ENCODE measurements at regions of chr4 and their contacts with region 1.

Region 1: DNA sequence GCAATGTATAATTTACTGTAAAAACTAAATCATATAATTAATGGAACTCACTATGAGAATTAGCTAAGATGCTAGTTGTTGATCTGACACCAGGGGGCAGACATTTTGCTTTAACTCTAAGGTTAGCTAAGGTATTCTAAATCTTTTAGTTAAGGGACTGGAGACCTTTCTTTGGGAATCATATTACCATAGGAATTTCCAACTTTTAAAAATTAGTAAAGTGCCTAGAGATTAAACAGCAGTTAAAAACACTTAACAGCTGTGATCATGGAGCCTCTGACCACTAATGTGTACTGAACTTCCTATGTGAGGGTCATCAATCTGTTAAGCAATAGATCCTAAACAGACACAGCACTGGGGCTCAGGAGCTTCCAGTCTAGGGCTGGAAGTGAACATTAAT is 226.6 kb downstream of the NSUN7 start:
- DNase-seq: no peak
- ATAC-seq: no peak

Region 2: GRCh38 chr4:40924096-40924792 is 52.1 kb before region 1 on chr4:
- intact Hi-C with region 1: loop called (anchors 5 kb)
- DNase-seq: peak; percentile 89
- ATAC-seq: peak; percentile 40

Region 3: DNA sequence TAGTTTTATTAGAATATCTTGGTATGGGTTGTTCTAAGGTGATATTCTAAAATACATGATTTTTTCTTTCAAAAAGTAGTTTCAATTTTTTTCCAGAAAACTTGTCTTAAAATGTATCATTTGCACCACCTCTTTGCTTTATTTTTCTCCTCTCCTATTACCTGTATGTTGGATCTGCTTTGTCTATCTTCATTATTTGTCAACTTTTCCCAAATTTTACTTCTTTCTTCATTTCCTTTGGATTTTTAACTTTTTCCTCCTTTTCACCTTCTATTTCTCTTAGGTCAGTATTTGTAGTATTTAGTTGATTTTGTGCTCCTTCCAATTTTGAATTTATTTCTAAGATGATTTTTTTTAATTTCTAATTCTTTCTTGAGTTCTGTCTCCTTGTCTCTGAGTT is 68.4 kb after region 1 on chr4:
- intact Hi-C with region 1: loop called (anchors 5 kb)
- DNase-seq: no peak
- ATAC-seq: no peak

Region 4: DNA sequence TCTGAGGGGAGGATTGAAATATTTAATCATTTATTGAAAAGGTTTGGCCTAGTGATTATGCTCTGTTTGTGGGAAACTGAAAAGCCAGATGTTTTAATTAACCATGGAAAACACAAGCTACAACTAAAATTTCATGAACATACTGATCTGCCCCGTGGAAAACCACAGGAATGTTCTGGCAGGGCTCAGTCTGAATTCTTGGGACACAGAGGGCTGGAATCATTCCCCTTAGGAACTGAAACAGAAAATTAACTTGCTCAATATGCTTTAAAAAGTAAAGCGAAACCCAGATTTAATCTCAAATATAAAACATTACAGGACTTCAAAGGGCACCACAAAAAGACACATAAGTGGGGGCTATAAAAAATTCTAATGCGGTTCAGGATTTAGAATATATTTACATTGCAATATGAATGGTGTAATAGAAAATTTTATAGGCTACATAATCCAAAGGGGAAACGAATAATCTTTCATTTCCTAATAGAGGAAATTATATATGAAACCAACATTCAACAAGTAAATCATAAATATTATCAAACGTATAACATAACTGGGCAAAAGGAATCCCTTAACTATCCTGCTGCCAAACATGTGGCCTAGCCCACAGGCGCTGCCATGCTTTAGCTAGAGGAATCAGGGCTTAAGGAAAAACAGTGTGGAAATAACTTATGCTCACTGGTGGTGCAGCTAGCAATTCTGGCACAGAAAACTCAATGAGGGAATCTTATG is 167.1 kb after region 1 on chr4:
- intact Hi-C with region 1: no loop called
- DNase-seq: no peak
- ATAC-seq: peak; percentile 84

Measured in Right ventricle myocardium inferior (tissue), 1 donor.